ENCODE measurements at regions of chr2 and their contacts with region 1.

Region 1: GRCh38 chr2:112317303-112318158 is 42.1 kb downstream of the ZC3H6 start:
- H3K4me3 Mint-ChIP-seq: no peak overlapping the region
- H3K27ac Mint-ChIP-seq: no peak overlapping the region
- H3K4me1 Mint-ChIP-seq: no peaks in the 10 kb centered on the region
- H3K27me3 Mint-ChIP-seq: no peaks in the 10 kb centered on the region

Region 2: DNA sequence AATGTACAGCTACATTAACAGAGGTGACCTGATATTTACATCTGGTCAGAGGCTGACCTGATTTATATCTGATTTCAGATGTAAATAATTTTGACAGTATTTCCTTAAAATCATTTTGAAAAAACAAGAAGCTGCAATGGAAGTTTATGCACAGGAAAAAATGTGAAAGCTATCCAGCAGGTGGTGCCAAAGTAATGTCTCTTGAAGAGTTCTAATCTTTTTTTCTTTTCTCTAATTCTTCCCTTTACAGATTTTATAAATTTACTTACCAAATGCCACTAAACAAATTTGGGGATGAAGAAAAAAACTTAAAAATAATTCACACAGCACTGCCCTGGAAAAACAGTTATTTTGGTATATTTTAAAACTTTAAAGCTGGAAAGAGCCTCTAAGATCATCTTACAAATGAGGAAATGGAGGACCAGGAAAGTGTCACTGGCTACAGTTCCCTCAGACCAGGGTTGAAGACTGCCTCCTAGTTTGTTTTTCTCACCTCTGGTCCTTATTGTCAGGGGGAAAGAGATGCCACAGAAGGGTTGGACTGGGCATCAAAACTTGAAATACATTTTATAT is 195.8 kb before region 1 on chr2:
- intact Hi-C with region 1: loop called (anchors 10 kb)
- H3K4me3 Mint-ChIP-seq: no peak overlapping the region
- H3K27ac Mint-ChIP-seq: no peak overlapping the region
- H3K4me1 Mint-ChIP-seq: no peaks in the 10 kb centered on the region
- H3K27me3 Mint-ChIP-seq: no peaks in the 10 kb centered on the region

Region 3: GRCh38 chr2:112259509-112260294 is 57.8 kb before region 1 on chr2:
- intact Hi-C with region 1: loop called (anchors 10 kb)
- H3K4me3 Mint-ChIP-seq: peak overlapping the region; percentile 52
- H3K27ac Mint-ChIP-seq: peak overlapping the region; percentile 55
- H3K4me1 Mint-ChIP-seq: peaks cover 32% of the 10 kb centered on the region
- H3K27me3 Mint-ChIP-seq: peaks cover 4% of the 10 kb centered on the region